OCI-LY7 (cell line): ENCODE measurements at regions of chr4 and their contacts with region 1.

Region 1: DNA sequence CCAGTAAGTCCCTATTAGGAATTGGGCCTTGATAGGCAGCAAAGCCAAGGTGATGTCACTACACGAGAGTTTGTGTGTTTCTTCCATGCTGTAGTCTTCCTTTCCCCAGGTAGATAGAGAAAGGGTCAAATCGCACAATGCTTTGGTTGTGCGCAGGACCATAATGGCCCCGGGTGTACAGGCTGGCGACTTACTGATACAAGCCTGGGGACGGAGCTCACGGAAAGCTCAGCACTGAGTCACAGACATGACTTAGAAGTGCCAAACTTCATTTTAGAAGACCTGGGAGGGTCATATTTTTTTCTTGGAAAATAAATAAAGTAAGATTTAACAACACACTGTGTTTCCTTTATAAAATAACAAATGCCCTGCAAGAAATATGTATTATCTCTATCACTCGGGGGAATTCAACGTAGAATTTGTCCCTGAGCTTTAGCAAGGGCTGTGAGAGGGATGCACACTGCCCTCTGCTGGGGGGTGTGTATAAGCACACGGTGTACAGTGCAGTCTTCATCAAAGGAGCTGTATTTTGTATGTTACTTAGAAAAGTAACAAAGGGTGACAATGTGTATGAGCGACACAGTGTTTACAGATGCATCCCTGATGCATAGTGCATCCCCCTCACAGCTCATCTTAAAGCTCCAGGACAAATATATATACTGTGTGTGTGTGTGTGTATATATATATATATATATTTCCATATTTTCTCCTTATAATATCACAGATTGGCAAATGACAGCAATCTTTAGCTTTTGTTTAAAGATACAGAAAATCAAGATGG is 254.5 kb upstream of the VEGFC start:
- DNase-seq: peak; percentile 59
- H3K4me3 ChIP-seq: no peak overlapping the region
- H3K27ac ChIP-seq: no peak overlapping the region
- H3K4me1 ChIP-seq: no peaks in the 10 kb centered on the region
- CTCF ChIP-seq: peak; percentile 88

Region 2: GRCh38 chr4:176034499-176034898 is 1012.8 kb before region 1 on chr4:
- CTCF ChIA-PET with region 1: no interaction called
- POLR2A ChIA-PET with region 1: no interaction called
- intact Hi-C with region 1: loop called (anchors 10 kb)
- DNase-seq: peak; percentile 35
- H3K4me3 ChIP-seq: no peak overlapping the region
- H3K27ac ChIP-seq: no peak overlapping the region
- H3K4me1 ChIP-seq: peaks cover 4% of the 10 kb centered on the region
- CTCF ChIP-seq: peak; percentile 73

Region 3: DNA sequence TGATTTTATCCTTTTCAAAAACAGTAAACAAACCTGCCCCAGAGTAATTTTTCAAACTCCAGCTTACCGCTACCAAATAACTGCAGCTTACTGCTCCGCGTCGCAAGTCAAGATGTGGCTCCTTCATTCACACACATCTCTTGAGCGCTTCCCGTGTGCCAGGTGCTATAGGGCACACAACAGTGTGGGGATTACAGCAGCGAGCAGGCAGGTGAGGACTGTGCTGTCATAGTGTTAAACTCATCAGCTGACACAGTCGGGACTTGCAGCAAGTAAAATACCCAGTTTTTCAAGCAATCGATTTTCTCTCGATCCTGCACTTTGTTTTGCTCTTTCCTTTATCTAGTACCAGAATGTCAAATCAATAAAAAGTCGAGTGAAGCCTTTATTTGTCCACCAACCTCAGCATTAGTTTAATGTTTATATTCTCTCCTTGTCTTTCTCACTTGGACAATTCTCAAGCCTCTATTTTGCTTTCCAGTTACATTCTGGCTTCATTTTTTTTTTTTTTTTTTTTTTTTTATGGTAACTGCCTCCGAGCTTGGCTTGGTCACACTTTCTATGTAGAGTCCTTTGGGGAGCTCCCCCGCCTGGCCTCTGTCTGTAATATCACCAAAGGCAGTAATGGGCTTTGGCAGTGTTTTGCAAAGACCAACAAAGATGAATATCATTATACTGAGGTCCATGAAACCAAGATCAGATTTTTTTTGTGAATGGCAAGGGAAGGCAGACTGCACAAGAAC is 769.9 kb before region 1 on chr4:
- CTCF ChIA-PET with region 1: no interaction called
- POLR2A ChIA-PET with region 1: no interaction called
- intact Hi-C with region 1: no loop called
- DNase-seq: peak; percentile 51
- H3K4me3 ChIP-seq: no peak overlapping the region
- H3K27ac ChIP-seq: no peak overlapping the region
- H3K4me1 ChIP-seq: no peaks in the 10 kb centered on the region
- CTCF ChIP-seq: peak; percentile 74

Region 4: DNA sequence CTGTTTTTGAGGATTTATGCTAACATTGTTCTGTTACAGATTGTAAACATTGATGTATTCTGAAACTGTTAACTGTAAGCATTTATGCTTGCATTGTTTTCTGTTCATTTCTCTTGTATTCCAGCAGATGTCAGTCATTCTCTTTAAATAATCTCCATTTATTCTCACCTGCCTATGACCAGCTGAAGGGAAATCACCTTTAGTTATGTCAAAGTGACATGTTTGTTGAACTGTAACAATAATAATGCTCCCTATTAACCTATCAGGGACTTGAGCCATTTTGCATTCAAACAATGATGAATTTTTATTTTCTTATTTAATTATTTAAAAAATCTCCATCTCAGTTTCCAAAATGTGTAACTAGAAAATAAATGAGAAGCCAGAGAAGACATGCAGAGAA is 669.5 kb before region 1 on chr4:
- CTCF ChIA-PET with region 1: no interaction called
- POLR2A ChIA-PET with region 1: no interaction called
- intact Hi-C with region 1: loop called (anchors 1 kb)
- DNase-seq: peak; percentile 21
- H3K4me3 ChIP-seq: no peak overlapping the region
- H3K27ac ChIP-seq: no peak overlapping the region
- H3K4me1 ChIP-seq: no peaks in the 10 kb centered on the region
- CTCF ChIP-seq: peak; percentile 81

Region 5: DNA sequence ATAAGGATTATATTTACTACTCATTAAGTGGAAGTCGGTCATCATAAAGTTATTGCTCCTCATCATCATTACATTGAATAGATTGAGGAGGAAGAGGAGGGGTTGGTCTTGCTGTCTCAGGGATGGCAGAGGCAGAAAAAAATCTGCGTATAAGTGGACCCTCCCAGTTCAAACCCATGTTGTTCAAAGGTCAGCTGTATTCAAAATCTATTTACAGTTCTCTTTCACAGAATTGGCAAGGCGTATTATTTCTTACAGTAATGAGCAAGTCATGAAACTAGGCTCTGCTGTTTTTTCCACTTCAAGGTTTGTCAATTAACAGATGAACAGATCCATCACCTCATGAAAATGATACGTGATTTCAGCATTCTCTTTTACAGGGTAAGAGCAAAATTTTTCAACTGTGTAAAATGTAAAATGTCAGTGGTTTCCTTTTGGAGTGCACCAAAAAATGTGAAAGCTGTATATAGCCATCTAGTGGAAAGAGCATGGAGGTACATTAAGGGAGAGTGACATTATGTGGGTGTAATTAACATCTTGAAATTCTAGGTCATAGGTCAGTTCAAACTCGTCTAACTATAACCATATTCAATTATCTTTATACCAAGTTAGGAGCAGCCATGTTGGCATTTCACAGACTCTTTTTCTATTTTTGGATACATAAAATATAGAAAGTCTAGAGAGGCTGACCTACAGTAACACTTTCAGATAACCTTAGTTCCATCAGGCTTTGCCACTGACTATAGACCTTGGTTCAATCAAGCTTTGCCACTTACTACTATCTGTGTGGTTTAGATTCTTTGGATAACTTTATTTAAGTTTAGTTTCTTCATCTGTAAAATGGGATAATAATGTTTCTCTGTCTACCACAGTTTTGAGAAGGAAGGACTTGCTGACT is 292.5 kb after region 1 on chr4:
- CTCF ChIA-PET with region 1: no interaction called
- POLR2A ChIA-PET with region 1: no interaction called
- intact Hi-C with region 1: loop called (anchors 10 kb)
- DNase-seq: peak; percentile 39
- H3K4me3 ChIP-seq: no peak overlapping the region
- H3K27ac ChIP-seq: no peak overlapping the region
- H3K4me1 ChIP-seq: no peaks in the 10 kb centered on the region
- CTCF ChIP-seq: peak; percentile 83